ENCODE measurements at regions of chr4 and their contacts with region 1.

Region 1: DNA sequence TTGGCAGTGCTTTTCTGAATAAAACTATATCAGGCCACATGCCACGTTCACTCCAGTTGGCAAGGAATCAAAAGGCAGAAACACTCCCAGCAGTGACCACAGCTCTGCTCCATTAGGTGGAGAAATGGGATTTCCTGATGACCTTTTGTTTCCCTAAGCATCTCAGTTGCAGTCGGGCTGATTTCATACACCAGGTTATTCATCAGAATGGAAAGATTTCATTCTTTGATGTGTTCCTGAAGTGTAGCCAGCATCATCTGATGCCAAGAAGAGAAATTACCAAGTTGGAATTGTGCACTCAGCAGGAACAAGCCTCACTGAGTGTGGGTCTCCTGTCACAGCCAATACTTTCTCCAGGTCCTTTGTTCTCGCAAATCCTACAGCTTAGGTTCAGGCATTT is 193.7 kb downstream of the SPATA18 start:
- H3K4me3 Mint-ChIP-seq: no peak overlapping the region
- H3K27ac Mint-ChIP-seq: no peak overlapping the region
- H3K4me1 Mint-ChIP-seq: no peaks in the 10 kb centered on the region
- H3K27me3 Mint-ChIP-seq: no peaks in the 10 kb centered on the region

Region 2: DNA sequence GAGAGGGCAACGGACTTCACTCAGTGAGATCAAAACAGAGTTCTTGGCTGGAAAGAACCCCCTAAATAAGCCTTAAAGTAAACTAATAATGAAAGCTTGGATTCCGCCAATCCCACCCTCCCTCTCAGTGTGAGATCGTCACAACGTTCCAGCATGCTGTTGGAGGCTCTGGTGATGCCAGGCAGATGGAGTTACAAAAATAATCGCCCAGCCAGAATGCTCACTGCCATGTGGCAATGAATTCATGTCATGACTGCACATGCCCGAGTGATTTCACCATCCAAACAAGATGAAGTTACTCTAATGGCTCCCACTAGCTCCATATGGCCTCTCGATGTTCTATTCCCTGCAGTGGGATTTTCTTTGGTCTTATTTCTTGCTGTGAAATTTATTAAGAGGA is 54.3 kb after region 1 on chr4:
- intact Hi-C with region 1: loop called (anchors 10 kb)
- H3K4me3 Mint-ChIP-seq: no peak overlapping the region
- H3K27ac Mint-ChIP-seq: no peak overlapping the region
- H3K4me1 Mint-ChIP-seq: no peaks in the 10 kb centered on the region
- H3K27me3 Mint-ChIP-seq: no peaks in the 10 kb centered on the region

Region 3: GRCh38 chr4:52535793-52536192 is 290.9 kb after region 1 on chr4:
- intact Hi-C with region 1: no loop called
- H3K4me3 Mint-ChIP-seq: no peak overlapping the region
- H3K27ac Mint-ChIP-seq: no peak overlapping the region
- H3K4me1 Mint-ChIP-seq: no peaks in the 10 kb centered on the region
- H3K27me3 Mint-ChIP-seq: no peaks in the 10 kb centered on the region